Activated CD4-positive, alpha-beta memory T cell treated with anti-CD3 and anti-CD28 coated beads, Interleukin-2, amount 10 ng/mL, durations not matched to agents 7 days and 5 days (primary cell): ENCODE measurements at regions of chr2 and their contacts with region 1.

Region 1: DNA sequence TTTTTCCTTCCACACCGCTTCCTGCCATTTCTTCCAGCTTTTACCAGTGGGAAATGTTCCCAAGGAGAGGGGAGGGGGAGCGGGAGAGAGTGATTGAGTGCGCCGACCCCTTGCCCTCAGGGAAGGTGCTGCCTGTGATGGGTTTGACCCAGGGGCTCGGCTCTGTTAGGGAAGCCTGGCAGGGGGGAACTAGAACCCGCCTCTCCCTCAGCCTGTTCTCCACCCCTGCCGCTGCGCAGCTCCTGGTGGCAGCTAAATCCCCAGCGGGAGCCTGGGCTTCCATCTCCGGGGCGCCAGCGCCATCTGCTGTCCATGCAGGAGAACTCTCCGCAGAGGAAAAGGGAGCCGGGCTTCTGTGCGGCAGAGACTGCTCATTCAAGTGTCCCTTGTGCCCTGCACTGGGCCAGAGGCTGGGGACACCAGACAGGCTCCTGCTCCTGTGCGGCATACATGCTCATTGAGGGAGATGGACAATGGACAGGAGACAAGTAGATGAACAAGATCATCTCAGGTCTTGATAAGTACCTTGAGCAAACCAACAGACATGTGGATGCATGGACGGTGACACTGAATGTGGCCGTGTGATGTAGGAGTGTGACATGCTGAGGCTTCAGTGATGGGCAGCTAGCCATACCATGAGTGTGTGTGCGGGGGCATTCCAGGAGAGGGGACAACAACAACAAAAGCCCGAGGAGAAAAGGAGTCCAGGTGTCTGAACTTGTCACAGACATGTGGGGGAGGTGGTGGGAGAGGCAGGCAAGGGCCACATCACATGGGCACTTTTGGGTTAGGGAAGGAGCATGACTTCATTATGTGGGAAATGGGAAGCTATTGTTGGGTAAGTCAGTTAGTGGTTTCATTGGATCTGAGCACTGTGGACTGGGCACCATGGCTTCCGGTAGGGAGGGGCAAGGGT is 13.3 kb downstream of the CHPF start:
- DNase-seq: peak; percentile 84
- H3K4me3 Mint-ChIP-seq: no peak overlapping the region
- H3K27ac Mint-ChIP-seq: no peak overlapping the region
- H3K4me1 Mint-ChIP-seq: no peaks in the 10 kb centered on the region
- H3K27me3 Mint-ChIP-seq: peaks cover 61% of the 10 kb centered on the region

Region 2: DNA sequence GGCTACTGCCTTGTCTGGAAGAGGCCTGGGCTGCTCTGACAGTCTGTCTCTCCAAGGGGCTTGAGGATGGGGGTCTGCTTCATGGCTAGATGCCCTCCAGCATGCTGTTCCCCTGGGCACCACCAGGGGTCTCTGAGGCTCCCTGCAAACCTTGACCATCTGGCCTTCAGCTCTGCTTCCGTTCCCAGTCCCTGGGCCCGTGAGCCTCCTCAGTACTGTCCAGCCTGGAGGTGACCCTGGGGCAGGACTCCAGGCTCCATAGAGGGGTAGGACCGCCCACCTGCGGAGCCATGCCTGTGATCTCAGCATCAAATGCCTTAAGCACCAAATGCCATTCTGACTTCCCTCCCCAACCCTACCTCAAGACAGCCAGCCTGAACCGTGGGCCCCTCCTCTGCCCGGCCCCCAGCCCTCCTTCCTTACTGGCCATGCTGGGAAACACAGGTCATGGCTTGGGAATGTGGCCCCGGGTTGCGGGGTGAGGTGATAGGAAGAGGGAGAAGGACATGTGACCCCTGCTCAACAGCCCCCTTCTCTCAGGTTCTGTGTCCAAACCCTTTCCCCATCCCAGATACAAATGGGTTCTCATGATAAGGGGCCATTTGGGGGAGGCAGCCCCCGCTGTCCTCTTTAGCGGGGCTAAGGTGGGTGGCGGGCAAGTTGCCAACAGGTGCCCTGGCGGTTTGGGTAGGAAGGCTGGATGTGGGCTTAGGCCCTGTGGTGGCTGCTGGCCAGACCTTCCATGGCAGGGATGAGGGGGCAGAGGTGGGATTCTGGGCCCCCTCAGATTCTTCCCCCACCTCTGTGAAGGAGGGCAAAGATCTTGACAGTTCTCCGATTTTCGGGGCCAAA is 70.6 kb before region 1 on chr2:
- CTCF ChIA-PET with region 1: interaction called, 20 read pairs
- POLR2A ChIA-PET with region 1: no interaction called
- DNase-seq: peak; percentile 39
- H3K4me3 Mint-ChIP-seq: no peak overlapping the region
- H3K27ac Mint-ChIP-seq: no peak overlapping the region
- H3K4me1 Mint-ChIP-seq: peaks cover 5% of the 10 kb centered on the region
- H3K27me3 Mint-ChIP-seq: no peaks in the 10 kb centered on the region

Region 3: DNA sequence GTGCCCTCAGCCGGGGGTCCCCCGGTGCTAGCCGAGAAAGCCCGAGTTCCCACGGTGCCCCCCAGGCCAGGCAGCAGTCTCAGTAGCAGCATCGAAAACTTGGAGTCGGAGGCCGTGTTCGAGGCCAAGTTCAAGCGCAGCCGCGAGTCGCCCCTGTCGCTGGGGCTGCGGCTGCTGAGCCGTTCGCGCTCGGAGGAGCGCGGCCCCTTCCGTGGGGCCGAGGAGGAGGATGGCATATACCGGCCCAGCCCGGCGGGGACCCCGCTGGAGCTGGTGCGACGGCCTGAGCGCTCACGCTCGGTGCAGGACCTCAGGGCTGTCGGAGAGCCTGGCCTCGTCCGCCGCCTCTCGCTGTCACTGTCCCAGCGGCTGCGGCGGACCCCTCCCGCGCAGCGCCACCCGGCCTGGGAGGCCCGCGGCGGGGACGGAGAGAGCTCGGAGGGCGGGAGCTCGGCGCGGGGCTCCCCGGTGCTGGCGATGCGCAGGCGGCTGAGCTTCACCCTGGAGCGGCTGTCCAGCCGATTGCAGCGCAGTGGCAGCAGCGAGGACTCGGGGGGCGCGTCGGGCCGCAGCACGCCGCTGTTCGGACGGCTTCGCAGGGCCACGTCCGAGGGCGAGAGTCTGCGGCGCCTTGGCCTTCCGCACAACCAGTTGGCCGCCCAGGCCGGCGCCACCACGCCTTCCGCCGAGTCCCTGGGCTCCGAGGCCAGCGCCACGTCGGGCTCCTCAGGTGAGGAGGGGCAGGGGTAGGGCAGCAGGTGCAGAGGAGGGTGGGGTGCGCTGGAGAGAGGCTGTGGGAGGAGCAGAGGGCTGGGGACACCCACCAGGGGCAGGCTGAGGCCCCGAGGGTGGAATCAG is 45.7 kb before region 1 on chr2:
- CTCF ChIA-PET with region 1: interaction called, 15 read pairs
- POLR2A ChIA-PET with region 1: no interaction called
- DNase-seq: no peak
- H3K4me3 Mint-ChIP-seq: no peak overlapping the region
- H3K27ac Mint-ChIP-seq: no peak overlapping the region
- H3K4me1 Mint-ChIP-seq: no peaks in the 10 kb centered on the region
- H3K27me3 Mint-ChIP-seq: peaks cover 41% of the 10 kb centered on the region

Region 4: GRCh38 chr2:219498280-219499057 is 31.8 kb before region 1 on chr2 and contains the start of gene GMPPA:
- CTCF ChIA-PET with region 1: interaction called, 175 read pairs
- POLR2A ChIA-PET with region 1: interaction called, 4 read pairs
- DNase-seq: peak; percentile 97
- H3K4me3 Mint-ChIP-seq: peak within 1 kb of the TSS; percentile 95
- H3K27ac Mint-ChIP-seq: peak within 1 kb of the TSS; percentile 64
- H3K4me1 Mint-ChIP-seq: peaks cover 48% of the 10 kb centered on the region
- H3K27me3 Mint-ChIP-seq: peaks cover 47% of the 10 kb centered on the region
- total RNA-seq, gene GMPPA: 41.0 to 42.3 TPM

Region 5: DNA sequence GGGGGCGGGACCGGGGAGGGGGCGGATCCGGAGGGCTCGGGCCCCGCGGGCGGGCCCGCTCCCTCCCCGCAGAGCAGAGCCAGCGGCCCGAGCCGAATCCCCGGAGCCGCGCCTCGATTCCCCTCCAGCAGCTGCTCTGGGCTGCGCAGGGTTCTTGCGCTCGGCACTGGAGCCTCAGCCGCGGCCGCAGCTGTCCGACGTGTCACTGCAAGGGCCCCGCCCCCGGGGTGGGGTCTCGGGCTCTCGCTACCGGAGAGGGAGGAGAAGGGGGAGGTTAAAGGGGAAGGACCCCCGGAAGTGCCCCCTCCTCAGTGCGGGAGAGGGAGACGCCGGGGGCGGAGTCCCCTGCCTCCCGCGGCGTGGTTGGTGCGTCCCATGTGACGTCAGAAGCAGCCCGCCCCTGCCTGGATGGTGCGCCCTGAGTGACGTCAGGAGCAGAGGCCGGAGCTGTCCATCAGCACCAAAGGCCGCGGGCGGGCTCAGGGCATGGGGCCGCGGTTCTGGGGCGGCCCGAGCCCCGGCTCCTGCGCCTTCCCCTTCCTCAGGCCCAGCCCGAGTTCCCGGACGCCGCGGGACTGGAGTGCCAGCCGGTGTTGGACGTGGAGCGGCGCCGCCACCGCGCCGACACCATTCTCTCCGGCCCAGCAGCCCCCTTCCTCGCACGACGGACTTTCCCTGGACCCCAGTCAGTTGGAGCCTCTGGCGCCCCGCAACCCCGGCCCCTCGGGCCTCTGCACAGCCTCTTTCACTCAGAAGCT is 13.5 kb after region 1 on chr2 and contains the starts of genes CHPF and TMEM198:
- CTCF ChIA-PET with region 1: interaction called, 25 read pairs
- POLR2A ChIA-PET with region 1: no interaction called
- DNase-seq: peak; percentile 95
- H3K4me3 Mint-ChIP-seq: peak within 1 kb of the TSS; percentile 78
- H3K27ac Mint-ChIP-seq: peak within 1 kb of the TSS; percentile 74
- H3K4me1 Mint-ChIP-seq: peaks cover 23% of the 10 kb centered on the region
- H3K27me3 Mint-ChIP-seq: peaks cover 17% of the 10 kb centered on the region
- total RNA-seq, gene CHPF: 14.5 to 14.9 TPM
- total RNA-seq, gene TMEM198: 0.95 to 1.0 TPM